ENCODE measurements at regions of chr16 and their contacts with region 1.

Region 1: DNA sequence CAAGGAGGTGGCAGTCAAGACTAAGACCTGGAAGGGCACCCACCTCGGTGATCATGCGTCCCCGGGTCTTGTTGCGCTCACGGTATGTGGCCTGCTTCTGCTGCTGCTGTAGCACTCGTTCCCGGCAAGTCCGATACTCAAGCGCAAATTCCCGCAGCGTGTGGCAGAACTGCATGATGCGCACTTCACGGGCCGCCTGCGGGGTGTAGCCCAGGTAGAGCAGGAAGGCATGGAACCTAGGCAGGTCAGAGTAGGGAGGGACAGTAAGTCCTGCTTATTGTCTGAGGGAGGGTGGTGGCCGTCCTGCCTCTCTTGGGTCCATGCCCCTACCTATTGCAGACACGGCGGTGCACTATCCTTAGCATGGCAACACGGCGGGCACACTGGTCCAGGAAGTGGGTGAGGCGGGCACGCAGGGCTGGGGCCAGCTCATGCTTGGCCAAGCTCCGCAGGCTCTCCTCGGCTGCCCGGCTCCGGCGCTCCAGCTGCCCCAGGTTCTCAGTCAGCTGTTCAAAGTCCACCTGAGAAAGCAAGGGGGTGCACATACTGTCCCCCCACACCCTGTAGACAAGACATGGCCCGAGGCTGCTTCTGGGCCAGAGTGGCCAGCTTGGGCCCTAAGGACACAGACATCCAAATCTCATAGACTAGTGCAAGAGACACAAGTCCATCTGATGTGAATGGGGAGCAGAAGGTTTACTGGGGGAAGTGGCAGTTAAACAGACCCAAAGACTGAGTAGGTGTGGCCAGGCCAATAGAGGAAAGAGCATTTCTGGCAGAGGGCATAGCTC is 3.5 kb downstream of the TMEM208 start:
- DNase-seq: peak in 1 of 3 donors; percentile 53
- ATAC-seq: no peak
- H3K4me3 ChIP-seq: no peak overlapping the region
- H3K27ac ChIP-seq: no peak overlapping the region
- H3K4me1 ChIP-seq: peaks cover 0 to 14% (median 3%) of the 10 kb centered on the region in 4 donors
- H3K27me3 ChIP-seq: no peaks in the 10 kb centered on the region
- CTCF ChIP-seq: no peak
- POLR2A ChIP-seq: no peak

Region 2: GRCh38 chr16:67198238-67198734 is 32.2 kb before region 1 on chr16:
- intact Hi-C with region 1: loop called in 1 of 2 experiments (anchors 5 kb)
- DNase-seq: no peak
- ATAC-seq: peak; percentile 5 to 50 (median 36)
- H3K4me3 ChIP-seq: no peak overlapping the region
- H3K27ac ChIP-seq: no peak overlapping the region
- H3K4me1 ChIP-seq: peaks cover 0 to 16% (median 2%) of the 10 kb centered on the region in 4 donors
- H3K27me3 ChIP-seq: no peaks in the 10 kb centered on the region
- CTCF ChIP-seq: peak; percentile 26 to 49 (median 30)
- POLR2A ChIP-seq: no peak

Measured in right lobe of liver (tissue), 6 donors.